Activated CD8-positive, alpha-beta T cell treated with anti-CD3 and anti-CD28 coated beads, Interleukin-2, amount 10 ng/mL, durations not matched to agents 7 days and 5 days (primary cell): ENCODE measurements at regions of chr1 and their contacts with region 1.

Region 1: GRCh38 chr1:58699011-58699762 is 675 bp downstream of the MYSM1 start:
- DNase-seq: no peak
- ATAC-seq: peak; percentile 27
- H3K4me3 Mint-ChIP-seq: peak overlapping the region; percentile 96
- H3K27ac Mint-ChIP-seq: peak overlapping the region; percentile 100
- H3K4me1 Mint-ChIP-seq: peaks cover 14% of the 10 kb centered on the region
- H3K27me3 Mint-ChIP-seq: peaks cover 5% of the 10 kb centered on the region

Region 2: GRCh38 chr1:58710190-58711085 is 11.3 kb after region 1 on chr1:
- CTCF ChIA-PET with region 1: interaction called, 28 read pairs
- POLR2A ChIA-PET with region 1: interaction called, 5 read pairs
- DNase-seq: no peak
- ATAC-seq: no peak
- H3K4me3 Mint-ChIP-seq: no peak overlapping the region
- H3K27ac Mint-ChIP-seq: no peak overlapping the region
- H3K4me1 Mint-ChIP-seq: peaks cover 5% of the 10 kb centered on the region
- H3K27me3 Mint-ChIP-seq: peaks cover 12% of the 10 kb centered on the region

Region 3: GRCh38 chr1:58718435-58718834 is 19.2 kb after region 1 on chr1:
- CTCF ChIA-PET with region 1: interaction called, 28 read pairs
- POLR2A ChIA-PET with region 1: interaction called, 19 read pairs
- DNase-seq: no peak
- ATAC-seq: peak; percentile 48
- H3K4me3 Mint-ChIP-seq: peak overlapping the region; percentile 51
- H3K27ac Mint-ChIP-seq: peak overlapping the region; percentile 87
- H3K4me1 Mint-ChIP-seq: peaks cover 37% of the 10 kb centered on the region
- H3K27me3 Mint-ChIP-seq: peaks cover 3% of the 10 kb centered on the region

Region 4: GRCh38 chr1:58874757-58875755 is 175.9 kb after region 1 on chr1:
- CTCF ChIA-PET with region 1: no interaction called
- POLR2A ChIA-PET with region 1: no interaction called
- DNase-seq: no peak
- ATAC-seq: no peak
- H3K4me3 Mint-ChIP-seq: no peak overlapping the region
- H3K27ac Mint-ChIP-seq: no peak overlapping the region
- H3K4me1 Mint-ChIP-seq: peaks cover 6% of the 10 kb centered on the region
- H3K27me3 Mint-ChIP-seq: peaks cover 7% of the 10 kb centered on the region

Region 5: DNA sequence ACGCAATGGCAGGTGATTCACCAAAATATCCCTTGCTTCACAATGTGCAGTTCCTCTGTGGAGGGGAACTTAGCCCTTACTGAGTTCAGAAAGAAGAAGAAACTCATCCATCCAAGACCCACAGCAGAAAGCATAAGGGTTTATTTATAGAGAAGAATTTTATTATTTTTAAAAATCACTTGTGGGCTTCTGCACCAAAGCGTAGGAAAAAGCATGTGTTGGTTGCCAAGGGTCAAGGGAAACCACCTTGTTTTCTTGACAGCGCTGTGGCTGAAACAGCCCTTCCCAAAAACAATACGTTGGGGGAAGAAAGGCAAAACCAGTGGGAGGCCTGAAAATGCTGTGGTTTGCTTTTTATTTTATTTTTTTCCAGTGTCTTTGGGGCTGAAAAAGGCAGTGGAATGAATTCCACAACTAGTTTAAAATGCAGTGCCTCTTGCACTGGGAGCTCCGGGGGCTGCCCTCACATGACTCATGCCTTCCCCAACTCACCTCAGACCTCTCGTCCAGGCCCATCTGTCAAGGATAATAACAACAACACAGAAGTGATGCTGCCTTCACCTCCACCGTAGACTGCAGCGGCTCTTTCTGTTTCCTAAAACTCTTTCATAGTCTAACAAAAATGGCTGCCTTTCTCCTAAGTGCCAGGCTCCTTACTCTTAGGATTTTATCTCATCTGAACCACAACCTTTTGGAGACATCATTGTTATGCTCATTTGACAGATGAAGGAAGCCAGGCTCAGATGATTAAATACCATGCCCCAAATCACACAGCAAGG is 308.8 kb after region 1 on chr1:
- CTCF ChIA-PET with region 1: no interaction called
- POLR2A ChIA-PET with region 1: no interaction called
- DNase-seq: no peak
- ATAC-seq: peak; percentile 66
- H3K4me3 Mint-ChIP-seq: no peak overlapping the region
- H3K27ac Mint-ChIP-seq: peak overlapping the region; percentile 31
- H3K4me1 Mint-ChIP-seq: peaks cover 38% of the 10 kb centered on the region
- H3K27me3 Mint-ChIP-seq: peaks cover 3% of the 10 kb centered on the region